ENCODE measurements at regions of chr12 and their contacts with region 1.

Region 1: DNA sequence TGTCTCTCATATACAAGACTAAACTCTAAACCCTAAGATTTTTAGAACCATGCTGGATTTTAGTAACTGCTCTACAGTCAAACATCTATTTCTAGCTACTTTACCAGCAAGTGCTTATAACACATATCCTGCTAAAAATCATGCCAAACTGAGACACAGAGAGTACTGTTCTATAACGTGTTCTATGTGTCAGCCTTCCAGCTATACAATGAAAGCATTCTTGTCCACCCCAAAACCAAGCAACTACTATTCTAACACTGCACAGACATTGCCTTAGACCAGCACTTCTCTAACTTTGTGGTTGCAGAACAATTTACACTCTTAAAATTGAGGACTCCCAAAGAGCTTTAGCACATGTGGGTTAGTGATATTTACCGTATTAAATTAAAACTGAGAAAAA is 85.7 kb downstream of the SPPL3 start:
- DNase-seq: no peak
- CTCF ChIP-seq: no peak

Region 2: GRCh38 chr12:120686690-120687577 is 131.5 kb before region 1 on chr12 and contains the start of gene MLEC:
- CTCF ChIA-PET with region 1: no interaction called
- POLR2A ChIA-PET with region 1: no interaction called
- DNase-seq: peak; percentile 99
- CTCF ChIP-seq: peak; percentile 52

Region 3: GRCh38 chr12:120775862-120776552 is 42.4 kb before region 1 on chr12:
- CTCF ChIA-PET with region 1: no interaction called
- POLR2A ChIA-PET with region 1: no interaction called
- DNase-seq: no peak
- CTCF ChIP-seq: no peak

Region 4: DNA sequence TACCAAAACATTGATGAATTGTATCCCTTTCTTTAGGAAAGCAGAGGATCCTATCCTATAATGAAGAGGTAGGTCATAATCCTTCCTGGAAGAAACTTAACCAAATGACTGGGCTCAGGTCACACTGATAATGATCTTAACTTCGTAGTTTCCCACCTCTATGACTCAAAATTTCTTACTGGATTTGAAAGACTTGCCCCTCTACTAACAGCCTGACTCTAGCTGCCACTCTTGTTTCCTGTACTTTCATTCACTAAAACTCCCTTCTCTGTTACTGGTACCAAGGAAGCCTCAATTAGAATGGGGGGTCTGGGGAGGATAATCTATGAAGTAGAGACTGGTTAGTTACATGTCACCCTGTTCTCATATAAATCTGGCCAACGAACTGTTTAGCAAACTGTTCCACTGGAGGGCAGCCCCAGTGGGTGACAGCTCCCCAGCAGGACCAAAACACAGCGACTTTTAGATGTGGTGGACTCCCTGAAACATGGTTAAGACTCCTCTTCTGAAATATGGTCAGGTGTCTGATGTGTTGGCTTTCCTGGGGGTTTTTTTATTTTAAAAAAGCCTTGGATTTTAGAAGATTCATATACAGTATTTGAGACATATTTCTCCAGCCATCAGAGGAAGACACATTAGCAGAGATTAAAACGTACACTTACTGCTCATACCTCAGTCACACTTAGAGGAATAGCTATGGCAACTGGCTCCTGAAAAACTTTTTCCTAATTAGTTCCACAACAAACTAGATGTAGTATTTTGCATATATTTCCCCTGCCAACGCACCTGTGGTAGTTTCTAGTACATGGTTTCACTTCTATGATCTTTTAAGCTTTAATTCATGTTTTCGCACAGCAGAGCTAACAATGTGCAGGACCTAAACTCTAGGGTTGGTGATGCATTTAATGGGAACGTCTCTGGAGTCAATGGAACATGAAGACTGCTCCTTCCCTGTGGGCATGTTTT is 20.5 kb before region 1 on chr12:
- CTCF ChIA-PET with region 1: interaction called, 32 read pairs
- POLR2A ChIA-PET with region 1: no interaction called
- DNase-seq: peak; percentile 22
- CTCF ChIP-seq: no peak

Measured in GM10248 (cell line).